ENCODE measurements at regions of chr5 and their contacts with region 1.

Region 1: GRCh38 chr5:68287976-68288706 is 72.6 kb downstream of the PIK3R1 start:
- DNase-seq: peak; percentile 71 to 91 (median 88)
- ATAC-seq: peak; percentile 93 to 94
- H3K4me3 ChIP-seq: peak overlapping the region; percentile 55
- H3K27ac ChIP-seq: peak overlapping the region; percentile 53
- H3K4me1 ChIP-seq: peaks cover 4% of the 10 kb centered on the region
- H3K27me3 ChIP-seq: no peaks in the 10 kb centered on the region

Region 2: DNA sequence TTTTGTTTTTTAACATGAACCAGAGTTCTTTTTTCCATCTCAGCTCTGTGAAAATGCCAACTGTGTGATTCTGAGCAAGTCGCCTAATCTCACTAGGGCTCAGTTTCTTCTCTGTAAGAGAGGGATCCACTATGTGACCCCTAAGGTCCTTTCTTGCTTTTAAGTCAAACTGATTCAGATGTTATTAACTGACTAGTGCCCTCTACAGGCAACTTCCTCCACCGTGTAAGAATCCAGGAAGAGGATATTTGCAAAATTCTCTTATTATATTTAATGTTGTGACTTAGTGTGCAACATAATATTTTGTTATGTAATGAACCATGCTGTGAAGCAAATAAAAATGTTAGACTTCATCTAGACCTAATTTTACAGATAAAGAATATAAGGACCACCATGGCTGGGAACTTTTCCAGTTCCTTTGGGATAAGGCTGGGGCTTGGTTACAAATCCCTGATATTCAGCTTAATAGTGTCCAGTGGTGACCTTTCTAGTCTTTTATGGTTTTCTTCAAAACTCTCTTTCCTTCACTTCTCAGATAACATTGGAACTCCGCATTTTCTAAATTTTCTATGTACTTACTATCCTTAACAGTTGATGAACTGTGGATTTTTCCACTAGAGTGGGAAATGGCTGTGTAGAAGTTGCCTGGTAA is 172.1 kb after region 1 on chr5:
- intact Hi-C with region 1: loop called (anchors 2 to 10 kb)
- DNase-seq: no peak
- ATAC-seq: peak in 1 of 2 donors; percentile 65
- H3K4me3 ChIP-seq: no peak overlapping the region
- H3K27ac ChIP-seq: no peak overlapping the region
- H3K4me1 ChIP-seq: peaks cover 2% of the 10 kb centered on the region
- H3K27me3 ChIP-seq: no peaks in the 10 kb centered on the region

Region 3: DNA sequence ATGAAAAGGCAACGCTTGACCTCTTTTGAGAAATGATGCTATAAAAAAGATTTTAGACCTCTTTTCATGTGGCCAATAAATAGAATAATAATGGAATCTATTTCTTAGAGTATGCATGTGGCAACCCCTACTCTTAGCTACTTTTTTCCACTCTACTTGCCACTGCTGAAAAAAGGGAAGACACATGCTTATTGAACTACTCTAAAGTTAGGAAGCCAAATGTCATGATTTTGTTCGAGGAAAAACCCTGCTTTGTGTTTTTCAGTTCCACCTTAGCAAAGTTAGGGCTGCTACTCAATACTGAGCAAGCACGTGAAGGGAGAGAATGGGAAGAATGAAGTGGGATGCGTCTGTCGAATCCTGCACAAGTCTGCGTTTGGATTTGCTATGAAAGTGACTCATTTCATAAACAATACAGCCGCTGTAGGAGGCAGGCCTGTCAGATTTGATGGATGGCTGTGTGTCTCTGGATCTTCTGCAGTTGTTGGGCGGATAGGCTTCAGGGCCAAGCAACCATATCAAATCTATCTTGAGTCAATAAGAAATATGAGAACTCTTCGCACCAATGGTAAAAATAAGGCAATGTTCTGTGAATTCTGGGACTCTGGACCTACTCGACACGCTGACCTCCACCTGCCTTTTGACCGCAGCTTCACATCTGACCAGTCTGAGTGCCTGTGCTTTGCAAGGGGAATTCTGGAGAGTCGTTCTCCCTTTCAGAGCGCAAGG is 261.0 kb after region 1 on chr5:
- intact Hi-C with region 1: loop called in 1 of 4 experiments (anchors 10 kb)
- DNase-seq: no peak
- ATAC-seq: no peak
- H3K4me3 ChIP-seq: no peak overlapping the region
- H3K27ac ChIP-seq: no peak overlapping the region
- H3K4me1 ChIP-seq: no peaks in the 10 kb centered on the region
- H3K27me3 ChIP-seq: no peaks in the 10 kb centered on the region

Region 4: GRCh38 chr5:68953875-68954617 is 665.9 kb after region 1 on chr5:
- intact Hi-C with region 1: loop called in 1 of 4 experiments (anchors 5 kb)
- DNase-seq: no peak
- ATAC-seq: peak; percentile 69 to 80
- H3K4me3 ChIP-seq: no peak overlapping the region
- H3K27ac ChIP-seq: no peak overlapping the region
- H3K4me1 ChIP-seq: peaks cover 13% of the 10 kb centered on the region
- H3K27me3 ChIP-seq: no peaks in the 10 kb centered on the region

Region 5: DNA sequence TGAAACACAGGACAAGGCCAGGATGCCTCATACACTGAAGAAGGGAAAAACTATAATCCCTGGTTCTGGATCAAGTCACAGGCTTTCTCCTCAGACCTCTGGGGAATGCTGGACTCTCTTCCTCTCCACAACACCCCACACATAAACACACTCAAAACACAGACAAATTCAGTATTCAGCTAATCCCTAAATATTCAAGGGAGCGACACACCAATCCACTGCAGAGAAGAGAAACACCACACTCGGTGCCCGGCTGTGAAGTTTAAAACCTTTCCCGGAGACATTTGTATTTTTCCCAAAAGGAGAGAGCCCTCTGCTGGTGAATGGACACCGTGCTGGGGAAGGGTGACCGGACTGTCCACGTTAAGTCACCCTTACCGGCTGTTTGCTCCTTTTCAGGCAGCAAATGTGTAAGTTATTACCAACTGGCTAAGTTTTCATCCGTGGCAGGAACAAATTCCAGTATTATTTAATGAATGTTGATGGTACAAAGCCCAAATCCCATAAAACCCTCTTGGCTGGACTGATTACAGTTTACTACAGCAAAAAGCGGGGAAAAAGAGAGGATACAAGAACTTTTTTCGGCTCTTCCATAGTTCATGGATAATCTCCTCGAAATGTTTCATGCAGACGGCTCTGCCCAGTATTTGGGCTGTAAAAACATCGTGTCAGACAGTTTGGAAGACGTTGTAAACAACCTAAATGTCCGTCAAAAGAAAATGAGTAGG is 674.8 kb after region 1 on chr5:
- intact Hi-C with region 1: loop called in 3 of 4 experiments (anchors 5 kb)
- DNase-seq: peak; percentile 52 to 84 (median 70)
- ATAC-seq: peak; percentile 88
- H3K4me3 ChIP-seq: no peak overlapping the region
- H3K27ac ChIP-seq: no peak overlapping the region
- H3K4me1 ChIP-seq: no peaks in the 10 kb centered on the region
- H3K27me3 ChIP-seq: no peaks in the 10 kb centered on the region